ENCODE measurements at regions of chr11 and their contacts with region 1.

Region 1: GRCh38 chr11:106076919-106077608 is at the start of gene KBTBD3:
- DNase-seq: peak; percentile 99
- H3K4me3 Mint-ChIP-seq: peak within 1 kb of the TSS; percentile 91
- H3K27ac Mint-ChIP-seq: peak within 1 kb of the TSS; percentile 94
- H3K4me1 Mint-ChIP-seq: peaks cover 45% of the 10 kb centered on the region
- H3K27me3 Mint-ChIP-seq: no peaks in the 10 kb centered on the region

Region 2: DNA sequence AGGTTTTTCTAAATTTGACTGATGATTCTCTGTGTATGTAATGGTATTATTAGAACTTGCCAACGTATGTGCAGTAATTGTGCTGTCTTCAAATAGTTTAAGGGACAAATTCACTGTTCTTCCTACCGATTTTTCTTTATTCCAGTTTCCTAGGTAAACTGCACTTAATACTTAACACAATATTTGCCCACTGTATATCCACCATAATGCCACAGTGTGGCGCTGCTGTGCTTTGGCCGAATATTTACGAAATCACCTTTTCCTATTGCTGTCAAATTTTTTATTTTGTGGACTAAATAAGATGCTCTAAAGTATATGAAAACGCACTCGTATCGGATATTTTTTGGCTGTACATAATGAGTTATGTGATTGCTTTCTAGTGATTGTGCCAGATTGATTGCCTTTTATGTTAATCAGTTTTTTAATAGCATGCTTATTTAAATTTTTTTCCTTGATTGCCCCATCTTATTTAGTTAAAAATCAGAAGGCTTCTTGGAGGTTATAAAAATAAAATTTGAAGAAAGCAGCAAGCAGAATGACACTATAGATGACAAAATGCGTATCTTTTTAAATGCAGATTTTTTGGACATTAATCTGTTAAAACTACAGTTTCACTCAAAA is 10.9 kb after region 1 on chr11:
- CTCF ChIA-PET with region 1: interaction called, 36 read pairs
- DNase-seq: peak; percentile 52
- H3K4me3 Mint-ChIP-seq: no peak overlapping the region
- H3K27ac Mint-ChIP-seq: peak overlapping the region; percentile 22
- H3K4me1 Mint-ChIP-seq: peaks cover 24% of the 10 kb centered on the region
- H3K27me3 Mint-ChIP-seq: no peaks in the 10 kb centered on the region

Region 3: GRCh38 chr11:106101819-106102218 is 24.8 kb after region 1 on chr11:
- CTCF ChIA-PET with region 1: no interaction called
- DNase-seq: no peak
- H3K4me3 Mint-ChIP-seq: no peak overlapping the region
- H3K27ac Mint-ChIP-seq: no peak overlapping the region
- H3K4me1 Mint-ChIP-seq: no peaks in the 10 kb centered on the region
- H3K27me3 Mint-ChIP-seq: no peaks in the 10 kb centered on the region